CD4-positive, alpha-beta memory T cell (primary cell): ENCODE measurements at regions of chr6 and their contacts with region 1.

Region 1: GRCh38 chr6:154830771-154831170 is 97.6 kb downstream of the SCAF8 start:
- DNase-seq: no peak
- H3K4me3 ChIP-seq: no peak overlapping the region
- H3K4me3 Mint-ChIP-seq: no peak overlapping the region
- H3K27ac ChIP-seq: no peak overlapping the region
- H3K27ac Mint-ChIP-seq: peak overlapping the region in 1 of 7 donors; percentile 31
- H3K4me1 ChIP-seq: peaks cover 10% of the 10 kb centered on the region
- H3K4me1 Mint-ChIP-seq: peaks cover 20 to 37% (median 22%) of the 10 kb centered on the region in 4 donors
- H3K27me3 ChIP-seq: no peaks in the 10 kb centered on the region
- H3K27me3 Mint-ChIP-seq: no peaks in the 10 kb centered on the region

Region 2: DNA sequence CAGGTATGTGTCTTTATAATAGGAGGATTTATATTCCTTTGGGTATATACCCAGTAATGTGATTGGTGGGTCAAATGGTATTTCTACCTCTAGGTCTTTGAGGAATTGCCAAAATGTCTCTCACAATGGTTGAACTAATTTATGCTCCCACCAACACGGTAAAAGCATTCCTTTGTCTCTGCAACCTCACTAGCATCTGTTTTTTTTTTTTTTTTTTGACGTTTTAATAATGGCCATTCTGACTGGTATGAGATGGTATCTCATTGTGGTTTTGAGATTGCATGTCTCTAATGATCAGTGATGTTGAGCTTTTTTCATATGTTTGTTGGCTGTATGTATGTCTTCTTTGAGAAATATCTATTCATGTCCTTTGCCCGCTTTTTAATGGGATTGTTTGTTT is 1554.8 kb before region 1 on chr6:
- CTCF ChIA-PET with region 1: no interaction called
- POLR2A ChIA-PET with region 1: no interaction called
- intact Hi-C with region 1: no loop called
- DNase-seq: no peak
- H3K4me3 ChIP-seq: no peak overlapping the region
- H3K4me3 Mint-ChIP-seq: no peak overlapping the region
- H3K27ac ChIP-seq: no peak overlapping the region
- H3K27ac Mint-ChIP-seq: no peak overlapping the region
- H3K4me1 ChIP-seq: no peaks in the 10 kb centered on the region
- H3K4me1 Mint-ChIP-seq: no peaks in the 10 kb centered on the region
- H3K27me3 ChIP-seq: no peaks in the 10 kb centered on the region
- H3K27me3 Mint-ChIP-seq: no peaks in the 10 kb centered on the region

Region 3: GRCh38 chr6:154815938-154816820 is 14.6 kb before region 1 on chr6:
- CTCF ChIA-PET with region 1: no interaction called
- POLR2A ChIA-PET with region 1: interaction called, 3 read pairs
- intact Hi-C with region 1: loop called (anchors 2 kb)
- DNase-seq: no peak
- H3K4me3 ChIP-seq: no peak overlapping the region
- H3K4me3 Mint-ChIP-seq: no peak overlapping the region
- H3K27ac ChIP-seq: no peak overlapping the region
- H3K27ac Mint-ChIP-seq: peak overlapping the region in 2 of 7 donors; percentile 25 to 42
- H3K4me1 ChIP-seq: no peaks in the 10 kb centered on the region
- H3K4me1 Mint-ChIP-seq: peaks cover 0 to 11% (median 4%) of the 10 kb centered on the region in 4 donors
- H3K27me3 ChIP-seq: no peaks in the 10 kb centered on the region
- H3K27me3 Mint-ChIP-seq: no peaks in the 10 kb centered on the region